WTC11 (cell line): ENCODE measurements at regions of chr15 and their contacts with region 1.

Region 1: DNA sequence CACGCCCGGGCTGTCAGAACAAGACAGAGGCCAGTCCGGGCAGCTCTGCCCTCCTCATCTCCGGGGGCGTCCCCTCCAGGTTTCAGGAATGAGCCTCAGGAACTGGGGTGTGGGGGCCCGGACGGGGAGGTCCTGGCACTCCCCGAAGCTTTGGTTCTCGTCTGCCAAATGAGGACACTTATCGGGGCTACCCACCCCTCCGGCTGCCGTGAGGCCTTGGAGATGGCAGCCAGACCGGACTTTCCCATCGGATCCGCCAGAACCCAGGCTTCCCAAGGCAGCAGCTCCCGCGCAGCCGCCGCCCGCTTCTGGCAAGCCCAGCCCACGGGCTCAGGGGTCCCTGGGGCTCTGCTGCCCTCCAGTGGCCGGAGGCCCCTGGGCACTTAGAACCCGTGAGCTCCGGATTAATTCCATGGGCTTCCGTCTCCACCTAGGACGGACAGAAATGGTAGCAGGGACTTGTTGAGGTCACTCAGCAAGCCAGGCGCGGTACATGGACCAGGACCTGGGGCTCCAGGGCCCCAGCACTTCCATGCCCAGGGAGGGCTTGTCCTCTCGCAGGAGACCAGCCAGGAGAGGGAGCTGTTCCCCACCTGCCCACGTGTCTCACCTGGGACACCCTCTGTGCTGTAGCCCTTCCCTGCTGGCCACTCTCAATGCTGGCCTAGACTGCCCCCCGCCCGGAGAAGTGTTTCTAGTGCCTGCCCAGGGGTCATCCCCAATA is 89.4 kb downstream of the LINGO1 start:
- DNase-seq: peak; percentile 90
- ATAC-seq: peak; percentile 76
- H3K4me3 Mint-ChIP-seq: no peak overlapping the region; the same call in 1 of the 2 replicates
- H3K27ac Mint-ChIP-seq: 0 out of 2 replicates have a peak overlapping the region, but pooled peaks have one; percentile 53
- H3K4me1 Mint-ChIP-seq: peaks cover 49% of the 10 kb centered on the region
- H3K27me3 Mint-ChIP-seq: peaks cover 5% of the 10 kb centered on the region
- CTCF ChIP-seq: peak; percentile 87

Region 2: DNA sequence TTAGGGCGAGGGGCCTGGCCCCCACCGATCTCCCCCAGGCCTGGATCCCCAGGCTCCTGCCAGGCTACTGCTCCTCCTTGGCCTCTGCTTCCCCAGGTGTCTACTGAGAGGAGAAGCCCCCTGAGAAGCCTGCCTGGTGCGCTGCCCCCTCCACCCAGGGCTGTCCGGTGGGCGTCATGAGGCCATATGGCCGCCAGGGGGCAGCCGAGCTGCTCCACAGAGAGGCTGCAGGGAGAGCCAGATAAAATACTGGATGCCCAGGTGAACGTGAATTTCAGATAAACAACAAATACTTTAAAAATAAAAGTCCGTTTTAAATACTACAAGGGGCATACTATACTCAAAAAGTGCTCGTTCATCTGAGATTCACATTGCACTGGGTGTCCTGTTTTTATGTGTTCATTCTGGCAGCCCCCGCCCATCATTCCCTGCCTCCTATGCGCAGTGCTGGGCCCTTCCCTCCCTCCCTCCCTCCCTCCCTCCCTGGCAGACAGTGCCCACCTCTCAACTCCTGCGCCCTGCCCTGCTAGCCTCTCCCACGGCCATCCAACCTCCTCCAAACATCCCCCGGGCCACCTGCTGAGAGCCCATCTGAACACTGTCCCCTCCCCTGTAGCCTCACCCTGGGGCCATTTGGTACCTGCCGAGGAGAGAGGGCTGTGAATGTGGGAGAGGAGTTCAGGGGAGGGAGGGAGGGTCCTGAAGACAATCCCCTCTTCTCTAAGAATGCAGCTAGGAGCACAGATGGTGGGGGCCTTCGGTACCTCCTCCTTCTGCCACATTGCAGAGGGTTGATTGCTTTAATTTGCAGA is 518.8 kb before region 1 on chr15:
- CTCF ChIA-PET with region 1: interaction called, 13 read pairs
- POLR2A ChIA-PET with region 1: no interaction called
- DNase-seq: peak; percentile 86
- ATAC-seq: peak; percentile 71
- H3K4me3 Mint-ChIP-seq: no peak overlapping the region
- H3K27ac Mint-ChIP-seq: no peak overlapping the region
- H3K4me1 Mint-ChIP-seq: no peaks in the 10 kb centered on the region
- H3K27me3 Mint-ChIP-seq: peaks cover 8% of the 10 kb centered on the region
- CTCF ChIP-seq: peak; percentile 96

Region 3: DNA sequence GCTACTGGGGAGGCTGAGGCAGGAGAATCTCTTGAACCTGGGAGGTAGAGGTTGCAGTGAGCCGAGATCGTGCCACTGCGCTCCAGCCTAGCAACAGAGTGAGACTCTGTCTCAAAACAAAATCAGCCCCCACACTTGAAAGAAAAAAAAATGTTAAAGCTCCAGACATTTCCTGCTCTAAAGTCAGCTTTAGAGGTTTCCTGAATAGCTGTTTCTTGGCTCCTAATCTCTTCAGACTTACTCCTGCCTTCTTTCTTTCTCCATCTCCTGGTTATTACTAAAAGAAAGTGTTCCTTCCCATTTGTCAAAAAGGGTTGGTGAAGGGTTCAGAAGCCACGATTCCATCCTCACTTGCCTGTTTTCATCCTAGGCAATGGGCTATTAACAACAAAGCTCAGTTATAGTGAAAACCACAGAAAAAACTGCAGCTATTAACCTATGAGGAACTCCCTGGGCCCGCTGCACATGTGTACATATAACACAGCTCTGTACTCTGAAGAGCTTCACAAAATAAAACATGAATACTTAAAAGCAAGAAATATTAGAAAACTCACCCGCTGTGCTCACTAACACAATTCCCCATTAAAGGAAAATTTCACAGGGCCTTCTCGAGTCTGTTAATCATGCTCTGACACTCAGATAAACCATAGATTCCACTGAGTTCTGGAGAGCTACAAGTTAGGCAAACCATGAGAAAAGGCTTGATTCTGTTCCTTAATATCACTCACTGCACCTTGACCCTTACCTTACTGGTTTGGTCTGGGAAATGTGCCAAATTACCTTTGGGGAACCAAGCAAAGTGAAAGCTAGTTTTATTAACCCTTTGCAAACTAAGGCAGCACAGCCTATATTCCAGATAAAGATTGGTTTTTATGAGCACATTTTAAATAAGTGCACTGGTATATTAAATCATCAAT is 382.5 kb before region 1 on chr15:
- CTCF ChIA-PET with region 1: interaction called, 11 read pairs
- POLR2A ChIA-PET with region 1: no interaction called
- DNase-seq: no peak
- ATAC-seq: peak; percentile 51
- H3K4me3 Mint-ChIP-seq: no peak overlapping the region
- H3K27ac Mint-ChIP-seq: peak overlapping the region; percentile 80
- H3K4me1 Mint-ChIP-seq: peaks cover 42% of the 10 kb centered on the region
- H3K27me3 Mint-ChIP-seq: no peaks in the 10 kb centered on the region
- CTCF ChIP-seq: no peak

Region 4: GRCh38 chr15:77475898-77476297 is 67.4 kb before region 1 on chr15:
- CTCF ChIA-PET with region 1: interaction called, 14 read pairs
- POLR2A ChIA-PET with region 1: no interaction called
- DNase-seq: peak; percentile 34
- ATAC-seq: peak; percentile 85
- H3K4me3 Mint-ChIP-seq: no peak overlapping the region
- H3K27ac Mint-ChIP-seq: no peak overlapping the region
- H3K4me1 Mint-ChIP-seq: peaks cover 41% of the 10 kb centered on the region
- H3K27me3 Mint-ChIP-seq: no peaks in the 10 kb centered on the region
- CTCF ChIP-seq: no peak

Region 5: DNA sequence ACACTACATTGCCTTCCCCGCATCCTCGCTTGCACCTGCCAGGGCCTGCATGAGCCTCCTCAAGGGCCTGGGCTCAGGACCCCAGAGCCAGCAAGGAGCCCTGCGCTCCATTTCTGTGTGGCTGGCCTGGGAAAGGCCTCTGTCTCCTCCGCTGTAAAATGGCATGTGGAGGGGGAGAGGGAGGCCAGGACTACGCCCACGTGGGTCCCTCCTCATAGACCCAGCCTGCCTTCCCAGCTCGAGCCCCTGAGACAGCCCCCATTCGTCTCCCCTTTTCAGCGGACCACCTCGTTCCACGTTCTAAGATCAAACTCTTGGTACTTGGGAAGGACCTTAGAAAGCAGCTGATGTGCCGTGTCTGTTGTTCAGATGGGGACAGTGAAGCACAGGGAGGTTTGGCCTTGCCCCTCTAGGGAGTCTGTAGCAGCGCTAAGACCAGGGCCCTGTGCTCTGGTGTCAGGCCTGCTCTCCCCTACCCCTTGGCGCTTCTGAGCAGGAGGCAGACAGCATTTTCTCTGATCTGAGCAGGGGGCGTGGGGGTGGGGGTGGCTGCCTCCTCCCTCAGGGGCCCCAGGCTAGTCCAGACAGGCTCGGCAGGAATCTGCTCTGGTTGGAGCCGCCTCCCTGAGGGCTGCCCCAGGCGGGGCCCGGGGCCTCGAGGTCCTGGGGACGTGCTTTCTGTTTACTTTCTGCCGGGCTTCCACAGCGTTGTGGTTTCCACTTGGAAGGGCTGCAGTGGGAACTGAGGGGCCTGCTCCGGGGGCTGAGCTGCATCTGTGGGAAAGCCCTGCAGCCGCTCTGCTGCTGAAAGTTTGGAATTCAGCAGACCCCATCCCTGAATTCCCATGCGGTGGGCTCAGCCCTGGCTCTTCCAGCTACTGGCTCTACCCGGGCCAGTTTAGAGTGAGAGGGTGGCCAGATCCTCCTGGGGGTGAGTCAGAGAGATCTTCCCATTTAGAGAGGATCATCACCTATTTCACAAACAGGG is 16.2 kb before region 1 on chr15:
- CTCF ChIA-PET with region 1: interaction called, 30 read pairs
- POLR2A ChIA-PET with region 1: no interaction called
- DNase-seq: peak; percentile 56
- ATAC-seq: peak; percentile 51
- H3K4me3 Mint-ChIP-seq: no peak overlapping the region
- H3K27ac Mint-ChIP-seq: no peak overlapping the region
- H3K4me1 Mint-ChIP-seq: peaks cover 57% of the 10 kb centered on the region
- H3K27me3 Mint-ChIP-seq: peaks cover 20% of the 10 kb centered on the region
- CTCF ChIP-seq: no peak

Region 6: GRCh38 chr15:77607111-77607893 is 64.0 kb after region 1 on chr15:
- CTCF ChIA-PET with region 1: interaction called, 16 read pairs
- POLR2A ChIA-PET with region 1: no interaction called
- DNase-seq: no peak
- ATAC-seq: no peak
- H3K4me3 Mint-ChIP-seq: no peak overlapping the region
- H3K27ac Mint-ChIP-seq: no peak overlapping the region
- H3K4me1 Mint-ChIP-seq: peaks cover 52% of the 10 kb centered on the region
- H3K27me3 Mint-ChIP-seq: no peaks in the 10 kb centered on the region; the same call in 1 of the 2 replicates
- CTCF ChIP-seq: no peak

Region 7: GRCh38 chr15:77695961-77696582 is 152.8 kb after region 1 on chr15:
- CTCF ChIA-PET with region 1: no interaction called
- POLR2A ChIA-PET with region 1: no interaction called
- DNase-seq: no peak
- ATAC-seq: no peak
- H3K4me3 Mint-ChIP-seq: no peak overlapping the region
- H3K27ac Mint-ChIP-seq: no peak overlapping the region
- H3K4me1 Mint-ChIP-seq: peaks cover 7% of the 10 kb centered on the region
- H3K27me3 Mint-ChIP-seq: no peaks in the 10 kb centered on the region
- CTCF ChIP-seq: no peak

Region 8: GRCh38 chr15:77768107-77768506 is 224.8 kb after region 1 on chr15:
- CTCF ChIA-PET with region 1: no interaction called
- POLR2A ChIA-PET with region 1: no interaction called
- DNase-seq: peak; percentile 38
- ATAC-seq: peak; percentile 85
- H3K4me3 Mint-ChIP-seq: no peak overlapping the region
- H3K27ac Mint-ChIP-seq: peak overlapping the region; percentile 39; the same call in 1 of the 2 replicates
- H3K4me1 Mint-ChIP-seq: peaks cover 27% of the 10 kb centered on the region
- H3K27me3 Mint-ChIP-seq: no peaks in the 10 kb centered on the region
- CTCF ChIP-seq: no peak

Region 9: GRCh38 chr15:77966540-77967290 is 423.4 kb after region 1 on chr15:
- CTCF ChIA-PET with region 1: no interaction called
- POLR2A ChIA-PET with region 1: no interaction called
- DNase-seq: peak; percentile 64
- ATAC-seq: peak; percentile 89
- H3K4me3 Mint-ChIP-seq: no peak overlapping the region
- H3K27ac Mint-ChIP-seq: no peak overlapping the region
- H3K4me1 Mint-ChIP-seq: no peaks in the 10 kb centered on the region
- H3K27me3 Mint-ChIP-seq: peaks cover 6% of the 10 kb centered on the region; the same call in 1 of the 2 replicates
- CTCF ChIP-seq: peak; percentile 60; the same call in 1 of the 2 replicates